ENCODE measurements at regions of chr1 and their contacts with region 1.

Region 1: GRCh38 chr1:33111970-33112369 is 31.0 kb downstream of the AZIN2 start:
- DNase-seq: no peak
- H3K4me3 Mint-ChIP-seq: no peak overlapping the region
- H3K27ac Mint-ChIP-seq: no peak overlapping the region
- H3K4me1 Mint-ChIP-seq: no peaks in the 10 kb centered on the region
- H3K27me3 Mint-ChIP-seq: no peaks in the 10 kb centered on the region
- CTCF ChIP-seq: no peak

Region 2: GRCh38 chr1:33036526-33037503 is 75.2 kb before region 1 on chr1 and contains the start of gene AK2:
- CTCF ChIA-PET with region 1: no interaction called
- intact Hi-C with region 1: no loop called
- DNase-seq: peak; percentile 96
- H3K4me3 Mint-ChIP-seq: peak within 1 kb of the TSS; percentile 88
- H3K27ac Mint-ChIP-seq: peak within 1 kb of the TSS; percentile 54
- H3K4me1 Mint-ChIP-seq: peaks cover 19% of the 10 kb centered on the region
- H3K27me3 Mint-ChIP-seq: no peaks in the 10 kb centered on the region
- CTCF ChIP-seq: no peak
- total RNA-seq, gene AK2: 226 and 233 TPM in 2 replicates

Region 3: DNA sequence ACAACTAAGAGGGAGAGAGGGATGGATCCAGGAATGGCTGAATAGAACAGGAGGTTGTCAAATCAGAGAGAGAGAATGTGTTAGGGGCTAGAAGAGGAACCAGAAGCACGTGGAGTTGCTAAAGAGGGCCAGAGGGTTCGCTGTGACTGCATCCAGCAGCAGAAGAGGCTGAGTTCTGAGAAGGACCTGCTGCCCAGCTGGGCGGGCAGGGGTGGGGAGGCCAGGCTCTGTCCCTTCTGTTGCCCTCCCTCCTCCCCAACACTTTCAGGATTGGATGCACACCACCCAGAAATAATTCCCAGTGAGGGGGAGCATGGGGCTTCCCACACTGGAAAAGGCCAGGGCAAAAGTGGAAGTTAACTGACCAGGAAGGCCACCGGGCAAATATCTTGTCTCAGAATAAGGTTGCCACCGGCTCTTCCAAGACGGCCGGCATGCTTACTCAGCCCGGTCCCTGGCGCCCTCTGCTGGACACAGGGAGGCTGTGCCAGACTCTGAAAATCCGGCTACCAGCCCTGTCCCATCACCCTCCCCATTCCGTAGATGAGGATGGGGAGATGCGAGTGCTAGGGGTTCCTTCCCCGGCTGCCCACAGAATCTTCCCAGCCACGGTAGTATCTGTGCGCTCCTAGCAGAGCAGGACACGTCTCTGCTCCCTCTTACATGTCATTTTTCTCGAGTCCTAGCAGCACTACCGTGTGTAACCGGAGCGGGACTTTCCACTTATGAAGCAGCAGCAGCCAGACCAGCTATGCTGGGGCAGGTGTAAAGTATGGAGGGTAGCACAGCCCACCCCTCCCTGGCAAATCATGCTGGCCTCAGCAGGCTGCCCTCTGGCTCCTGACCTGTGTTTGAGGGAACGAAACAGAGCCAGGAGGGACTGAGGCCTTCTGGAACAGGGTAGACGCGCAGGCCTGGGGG is 255.8 kb after region 1 on chr1:
- CTCF ChIA-PET with region 1: no interaction called
- intact Hi-C with region 1: loop called (anchors 5 kb)
- DNase-seq: peak; percentile 90
- H3K4me3 Mint-ChIP-seq: peak overlapping the region; percentile 16
- H3K27ac Mint-ChIP-seq: no peak overlapping the region
- H3K4me1 Mint-ChIP-seq: no peaks in the 10 kb centered on the region
- H3K27me3 Mint-ChIP-seq: no peaks in the 10 kb centered on the region
- CTCF ChIP-seq: peak; percentile 91

Region 4: DNA sequence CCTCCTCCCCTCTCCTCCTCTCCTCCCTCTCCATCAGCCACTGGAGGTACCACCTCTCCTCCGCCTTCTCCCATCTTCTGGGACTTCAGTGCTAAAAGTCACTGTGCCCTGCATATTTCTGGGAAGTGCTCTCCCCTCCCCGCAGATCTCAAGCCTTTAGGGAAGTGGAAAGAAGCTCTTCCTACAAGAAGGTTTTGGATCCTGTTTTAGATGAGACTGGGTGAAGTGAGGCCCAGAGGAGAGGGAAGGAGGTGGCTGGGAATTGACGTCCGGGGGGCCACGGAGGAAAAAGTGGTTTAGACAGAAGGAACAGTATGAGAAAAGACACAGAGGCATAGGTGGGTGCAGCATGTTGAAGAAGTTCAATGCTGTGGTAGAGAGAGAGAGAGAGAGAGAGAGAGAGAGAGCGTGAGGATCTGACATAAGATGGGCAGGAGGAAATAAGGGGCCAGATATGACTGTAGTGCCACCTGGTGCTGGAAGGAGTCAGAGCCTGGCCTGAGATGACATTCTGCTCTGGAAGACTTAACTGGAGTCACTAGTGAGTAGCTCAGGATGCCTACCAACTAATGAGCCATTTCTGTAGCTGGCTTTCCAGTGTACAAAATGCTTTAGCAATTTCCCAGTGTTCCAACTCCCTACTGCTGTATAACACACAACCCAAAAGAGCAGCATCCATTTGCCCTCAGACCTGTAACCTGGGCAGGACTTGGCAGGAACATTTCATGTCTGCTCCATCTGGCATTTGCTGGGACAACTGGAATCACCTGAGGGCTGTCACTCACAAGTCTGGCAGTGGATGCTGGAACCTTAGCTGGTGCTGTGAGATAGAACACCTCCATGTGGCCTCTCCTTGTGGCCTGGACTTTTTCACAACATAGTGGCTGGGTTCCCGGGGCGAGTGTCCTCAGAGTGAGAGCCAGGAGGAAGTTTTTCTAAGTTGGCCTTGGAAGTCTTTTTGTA is 343.9 kb after region 1 on chr1:
- CTCF ChIA-PET with region 1: no interaction called
- intact Hi-C with region 1: loop called (anchors 5 kb)
- DNase-seq: peak; percentile 49
- H3K4me3 Mint-ChIP-seq: no peak overlapping the region
- H3K27ac Mint-ChIP-seq: no peak overlapping the region
- H3K4me1 Mint-ChIP-seq: peaks cover 17% of the 10 kb centered on the region
- H3K27me3 Mint-ChIP-seq: peaks cover 28% of the 10 kb centered on the region
- CTCF ChIP-seq: peak; percentile 51